ENCODE measurements at regions of chr2 and their contacts with region 1.

Region 1: GRCh38 chr2:85302121-85302520 is 25.7 kb downstream of the TGOLN2 start:
- DNase-seq: no peak
- ATAC-seq: peak in 1 of 4 donors; percentile 26
- H3K4me3 ChIP-seq: no peak overlapping the region
- H3K27ac ChIP-seq: no peak overlapping the region
- H3K4me1 ChIP-seq: no peaks in the 10 kb centered on the region
- H3K27me3 ChIP-seq: no peaks in the 10 kb centered on the region
- CTCF ChIP-seq: no peak

Region 2: GRCh38 chr2:85066874-85067351 is 235.2 kb before region 1 on chr2:
- intact Hi-C with region 1: loop called in 1 of 3 experiments (anchors 5 kb)
- DNase-seq: peak; percentile 36 to 80 (median 67)
- ATAC-seq: peak; percentile 79 to 97 (median 93)
- H3K4me3 ChIP-seq: peak overlapping the region in 1 of 4 donors; percentile 16
- H3K27ac ChIP-seq: no peak overlapping the region
- H3K4me1 ChIP-seq: no peaks in the 10 kb centered on the region
- H3K27me3 ChIP-seq: no peaks in the 10 kb centered on the region
- CTCF ChIP-seq: peak; percentile 55 to 78 (median 72)

Measured in pancreas (tissue), 10 donors.